ENCODE measurements at regions of chr22 and their contacts with region 1.

Region 1: DNA sequence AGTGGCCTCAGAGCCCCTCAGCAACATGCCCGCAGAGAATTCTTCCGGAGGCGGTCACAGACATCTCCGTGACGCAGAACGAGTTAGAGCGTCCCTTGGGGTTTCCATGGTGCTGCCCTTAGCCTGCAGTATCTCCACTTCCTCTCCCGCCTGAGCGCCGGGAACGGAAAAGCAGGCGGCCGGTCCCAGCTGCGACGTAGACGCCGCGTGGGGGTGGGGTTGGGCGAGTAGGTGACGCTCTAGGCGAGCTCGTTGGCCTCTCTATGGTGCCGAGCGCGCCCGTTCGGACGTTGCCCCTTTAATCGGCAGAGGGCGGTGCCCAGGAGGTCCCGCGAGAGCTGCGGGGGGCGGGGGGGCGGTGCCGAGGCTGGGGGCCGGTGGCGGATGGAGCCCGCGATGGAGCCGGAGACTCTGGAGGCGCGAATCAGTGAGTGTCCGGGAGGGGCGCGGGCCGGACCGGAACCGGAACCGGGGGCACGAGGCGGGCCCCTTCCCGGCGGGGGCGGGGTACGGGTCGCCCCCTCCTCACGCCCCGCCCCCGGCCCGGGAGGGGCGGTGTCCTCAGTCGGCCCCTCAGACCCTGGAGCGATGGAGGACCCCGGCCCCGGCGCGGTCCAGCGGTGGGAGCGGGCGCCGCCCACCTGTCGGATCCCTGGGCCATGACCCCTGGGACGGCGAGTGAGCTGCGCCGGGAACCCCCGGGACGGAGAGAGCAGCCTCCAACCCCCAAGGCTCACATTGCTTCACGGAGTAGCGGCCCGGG is at the start of gene GGA1:
- DNase-seq: peak; percentile 98
- H3K4me3 Mint-ChIP-seq: peak within 1 kb of the TSS; percentile 90
- H3K27ac Mint-ChIP-seq: peak within 1 kb of the TSS; percentile 95
- H3K4me1 Mint-ChIP-seq: peaks cover 58% of the 10 kb centered on the region
- H3K27me3 Mint-ChIP-seq: no peaks in the 10 kb centered on the region
- total RNA-seq, gene GGA1: 58.5 to 62.8 TPM

Region 2: DNA sequence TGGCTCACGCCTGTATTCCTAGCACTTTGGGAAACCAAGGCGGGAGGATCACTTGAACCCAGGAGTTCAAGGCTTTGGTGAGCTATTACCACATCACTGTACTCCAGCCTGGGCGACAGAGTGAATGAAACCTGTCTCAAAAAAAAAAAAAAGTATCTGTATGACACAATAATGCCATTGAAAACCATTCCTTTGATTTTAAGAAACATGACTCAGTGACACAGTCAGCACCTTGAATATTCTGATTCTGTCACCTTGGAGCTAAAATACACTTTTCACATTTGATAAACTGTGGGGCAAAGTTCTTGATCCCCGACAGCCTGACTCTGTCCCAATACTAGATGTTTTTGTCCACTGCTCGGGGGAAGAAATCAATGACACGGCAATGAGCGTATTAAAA is 164.7 kb before region 1 on chr22:
- CTCF ChIA-PET with region 1: no interaction called
- POLR2A ChIA-PET with region 1: no interaction called
- DNase-seq: no peak
- H3K4me3 Mint-ChIP-seq: no peak overlapping the region
- H3K27ac Mint-ChIP-seq: no peak overlapping the region
- H3K4me1 Mint-ChIP-seq: peaks cover 6% of the 10 kb centered on the region
- H3K27me3 Mint-ChIP-seq: peaks cover 11% of the 10 kb centered on the region

Region 3: DNA sequence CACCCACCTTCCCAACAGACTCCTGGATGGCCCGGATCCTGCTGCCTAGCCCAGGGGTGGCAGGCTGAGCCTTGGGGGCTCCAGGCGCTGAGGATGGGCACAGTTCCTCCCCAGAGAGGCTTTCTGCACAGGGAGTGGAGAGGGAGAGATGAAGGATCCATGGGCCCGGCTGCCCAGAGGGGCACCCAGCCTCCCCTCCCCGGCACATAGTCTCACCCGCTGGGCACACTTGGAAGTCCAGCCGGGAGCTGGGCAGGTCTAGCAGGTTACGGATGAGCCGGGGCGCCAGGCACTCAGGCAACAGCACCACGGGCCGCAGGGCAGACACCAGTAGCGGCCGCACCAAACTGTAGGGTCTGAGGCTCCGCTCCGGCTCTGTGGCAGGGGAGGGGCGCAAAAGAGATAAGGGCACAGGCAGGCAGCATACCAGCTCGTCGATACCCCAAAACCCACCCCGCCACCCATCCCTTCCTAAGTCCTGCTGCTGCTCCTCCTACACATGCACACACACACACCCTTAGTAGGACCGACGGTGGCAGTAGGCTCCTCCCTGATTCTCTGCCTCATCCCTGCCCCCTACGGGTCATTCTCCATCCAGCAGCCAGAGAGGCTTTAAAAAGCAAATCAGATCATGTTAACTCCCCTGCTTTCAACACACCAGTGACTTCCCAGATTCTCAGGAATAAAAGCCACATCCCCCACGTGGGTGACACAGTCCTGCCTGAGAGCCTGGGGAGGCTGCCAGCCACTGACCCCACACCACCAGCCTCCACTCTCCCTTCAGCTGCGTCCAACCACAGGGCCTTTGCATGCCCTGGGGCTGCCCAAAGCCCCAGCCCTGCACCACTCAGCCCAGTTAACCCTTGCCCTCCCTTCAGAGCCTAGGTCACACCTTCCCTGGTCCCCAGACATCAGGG is 116.0 kb before region 1 on chr22:
- CTCF ChIA-PET with region 1: no interaction called
- POLR2A ChIA-PET with region 1: no interaction called
- DNase-seq: peak; percentile 66
- H3K4me3 Mint-ChIP-seq: no peak overlapping the region
- H3K27ac Mint-ChIP-seq: no peak overlapping the region
- H3K4me1 Mint-ChIP-seq: peaks cover 36% of the 10 kb centered on the region
- H3K27me3 Mint-ChIP-seq: no peaks in the 10 kb centered on the region

Region 4: DNA sequence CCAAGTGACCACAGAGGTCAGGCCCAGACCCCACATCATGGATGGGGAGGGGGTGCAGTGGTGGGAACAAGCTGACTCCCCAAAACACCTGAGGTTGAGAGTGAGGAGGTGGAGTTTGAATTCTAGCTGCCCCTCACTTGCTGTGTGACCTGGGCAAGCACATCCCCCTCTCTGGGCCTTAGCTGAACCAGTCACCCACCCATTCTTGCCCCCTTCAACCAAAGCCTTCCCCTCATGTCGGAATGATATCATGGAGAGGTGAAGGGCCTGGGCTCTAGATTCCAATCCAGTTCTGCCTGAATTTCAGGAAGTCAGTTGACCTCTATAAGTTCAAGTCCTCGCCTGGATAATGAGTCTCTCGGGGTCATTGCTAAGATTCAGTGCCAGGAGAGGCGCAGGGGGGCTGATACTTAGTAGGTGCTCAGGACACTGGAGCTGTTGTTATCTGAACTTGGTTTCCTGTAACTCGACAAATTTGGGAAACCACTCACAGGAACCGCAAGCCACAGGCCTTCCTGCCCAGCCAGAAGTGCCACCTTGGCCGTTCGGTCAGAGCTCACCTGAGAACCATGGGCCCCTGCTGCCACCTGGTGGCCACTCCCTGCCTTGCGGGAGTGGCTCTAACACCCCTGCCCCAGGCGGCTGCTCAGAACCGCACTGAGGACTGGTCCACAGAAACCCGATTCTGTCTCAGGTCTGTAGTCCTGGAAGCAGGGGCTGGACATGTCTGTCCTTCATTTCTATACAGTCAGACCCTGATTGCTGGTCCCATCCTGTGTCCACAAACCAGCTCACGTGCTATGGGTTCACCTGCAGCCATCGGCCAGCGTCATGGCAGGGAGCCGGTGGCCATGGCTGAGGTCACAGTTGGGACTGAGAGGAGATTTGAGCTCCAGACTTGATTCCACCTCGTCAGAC is 41.5 kb before region 1 on chr22:
- CTCF ChIA-PET with region 1: interaction called, 21 read pairs
- POLR2A ChIA-PET with region 1: no interaction called
- DNase-seq: peak; percentile 94
- H3K4me3 Mint-ChIP-seq: peak overlapping the region; percentile 41
- H3K27ac Mint-ChIP-seq: peak overlapping the region; percentile 73
- H3K4me1 Mint-ChIP-seq: peaks cover 23% of the 10 kb centered on the region
- H3K27me3 Mint-ChIP-seq: peaks cover 38% of the 10 kb centered on the region

Region 5: GRCh38 chr22:37625737-37626521 is 17.3 kb after region 1 on chr22:
- CTCF ChIA-PET with region 1: interaction called, 14 read pairs
- POLR2A ChIA-PET with region 1: no interaction called
- DNase-seq: no peak
- H3K4me3 Mint-ChIP-seq: no peak overlapping the region
- H3K27ac Mint-ChIP-seq: peak overlapping the region; percentile 89
- H3K4me1 Mint-ChIP-seq: peaks cover 50% of the 10 kb centered on the region
- H3K27me3 Mint-ChIP-seq: no peaks in the 10 kb centered on the region

Region 6: DNA sequence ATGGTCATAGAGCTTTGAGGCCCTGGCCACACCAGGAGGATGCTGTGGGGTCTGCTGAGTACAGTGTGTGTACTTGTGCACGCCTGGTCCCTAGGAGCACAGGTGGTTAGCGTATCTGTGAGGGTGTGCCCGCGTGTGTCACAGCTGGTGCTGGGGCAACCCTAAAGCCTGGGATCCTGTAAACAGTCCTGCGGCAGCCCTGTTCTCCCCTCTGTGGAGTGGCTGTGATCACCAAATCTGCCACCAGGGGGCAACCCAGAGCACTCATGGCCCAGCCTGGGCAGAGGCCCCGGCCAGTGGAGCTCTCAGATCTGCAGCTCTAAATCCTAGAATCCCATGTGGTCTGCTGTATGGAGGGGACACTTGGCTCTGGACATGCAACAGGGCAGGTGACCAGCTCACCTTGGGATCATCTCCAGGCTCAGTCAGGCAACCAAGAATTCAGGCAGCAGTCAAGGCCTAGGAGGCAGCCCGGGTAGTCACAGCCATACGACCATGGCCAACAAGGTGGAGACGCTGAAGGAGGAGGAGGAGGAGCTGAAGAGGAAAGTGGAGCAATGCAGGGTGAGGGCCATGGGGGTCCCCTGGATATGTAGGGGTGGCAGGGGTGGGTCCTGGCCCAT is 34.7 kb after region 1 on chr22:
- CTCF ChIA-PET with region 1: interaction called, 26 read pairs
- POLR2A ChIA-PET with region 1: no interaction called
- DNase-seq: peak; percentile 89
- H3K4me3 Mint-ChIP-seq: peak overlapping the region; percentile 49
- H3K27ac Mint-ChIP-seq: peak overlapping the region; percentile 68
- H3K4me1 Mint-ChIP-seq: peaks cover 33% of the 10 kb centered on the region
- H3K27me3 Mint-ChIP-seq: no peaks in the 10 kb centered on the region

Region 7: GRCh38 chr22:37726241-37726887 is 117.7 kb after region 1 on chr22:
- CTCF ChIA-PET with region 1: no interaction called
- POLR2A ChIA-PET with region 1: no interaction called
- DNase-seq: no peak
- H3K4me3 Mint-ChIP-seq: no peak overlapping the region
- H3K27ac Mint-ChIP-seq: no peak overlapping the region
- H3K4me1 Mint-ChIP-seq: peaks cover 7% of the 10 kb centered on the region
- H3K27me3 Mint-ChIP-seq: no peaks in the 10 kb centered on the region

Region 8: DNA sequence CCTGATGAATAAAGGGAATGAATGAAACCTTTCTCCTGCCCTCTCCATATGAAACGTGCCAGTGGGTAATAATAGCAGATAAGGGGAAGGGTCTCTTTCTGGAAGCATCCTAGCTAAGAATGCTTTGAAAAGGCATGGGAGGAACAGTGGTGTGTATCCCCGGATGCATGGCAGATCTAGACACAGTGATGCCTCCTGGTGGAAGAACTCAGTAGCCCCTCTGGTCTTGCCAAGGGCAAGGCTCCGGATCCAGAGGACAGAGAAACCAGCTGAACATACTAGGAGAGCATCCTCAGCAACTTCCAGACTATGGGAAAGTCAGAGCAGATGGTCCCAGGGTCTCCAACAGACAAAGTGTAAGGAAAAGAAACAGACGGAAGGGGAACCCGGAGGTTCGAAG is 495.4 kb after region 1 on chr22:
- CTCF ChIA-PET with region 1: no interaction called
- POLR2A ChIA-PET with region 1: no interaction called
- DNase-seq: no peak
- H3K4me3 Mint-ChIP-seq: no peak overlapping the region
- H3K27ac Mint-ChIP-seq: no peak overlapping the region
- H3K4me1 Mint-ChIP-seq: peaks cover 17% of the 10 kb centered on the region
- H3K27me3 Mint-ChIP-seq: no peaks in the 10 kb centered on the region

Measured in activated CD4-positive, alpha-beta T cell treated with anti-CD3 and anti-CD28 coated beads, Interleukin-2, amount 10 ng/mL, durations not matched to agents 7 days and 5 days (primary cell).